Activated T-helper 1 cell treated with anti-CD3 and anti-CD28 coated beads, Interleukin-12 subunit alpha, Interleukin-12 subunit beta, Interleukin-2, Interleukin-4 antibody, amounts not matched to agents 30 ng/mL and 10 ng/mL and 1 ng/mL, durations not matched to agents 14 hours and 24 hours and 36 hours (primary cell): ENCODE measurements at regions of chr6 and their contacts with region 1.

Region 1: DNA sequence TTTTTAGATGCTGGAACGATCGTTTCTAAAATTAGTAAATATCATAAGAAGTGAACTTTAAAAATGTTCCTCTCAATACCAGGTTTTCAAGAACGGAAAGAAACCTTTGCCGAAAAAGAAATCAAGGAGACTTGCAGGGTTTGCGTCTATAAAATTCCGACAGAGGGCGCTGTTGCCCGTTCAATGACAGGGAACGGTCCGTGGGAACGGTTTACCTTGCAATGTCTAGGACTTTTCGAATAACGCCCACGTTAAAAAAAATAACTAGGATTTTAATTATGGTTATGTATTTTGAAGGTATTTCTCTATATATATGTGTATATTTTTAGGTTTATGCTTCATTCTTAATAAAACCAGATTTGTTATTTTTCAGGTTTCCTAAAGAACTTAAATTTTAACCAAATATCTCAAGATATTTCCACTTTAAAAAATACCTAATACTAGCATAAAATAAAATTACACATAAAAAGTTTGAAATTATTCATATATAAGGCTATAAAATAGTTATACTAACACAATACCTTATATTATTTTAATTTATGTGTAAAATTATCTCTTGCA is 2.5 kb upstream of the TFAP2B start:
- DNase-seq: peak; percentile 37
- H3K4me3 Mint-ChIP-seq: peak overlapping the region; percentile 88
- H3K27ac Mint-ChIP-seq: no peak overlapping the region
- H3K4me1 Mint-ChIP-seq: peaks cover 19% of the 10 kb centered on the region
- H3K27me3 Mint-ChIP-seq: peaks cover 48% of the 10 kb centered on the region

Region 2: GRCh38 chr6:50720623-50721022 is 95.6 kb before region 1 on chr6:
- intact Hi-C with region 1: loop called (anchors 2 kb)
- DNase-seq: no peak
- H3K4me3 Mint-ChIP-seq: no peak overlapping the region
- H3K27ac Mint-ChIP-seq: no peak overlapping the region
- H3K4me1 Mint-ChIP-seq: peaks cover 5% of the 10 kb centered on the region
- H3K27me3 Mint-ChIP-seq: peaks cover 63% of the 10 kb centered on the region

Region 3: GRCh38 chr6:50873167-50873566 is 57.0 kb after region 1 on chr6:
- intact Hi-C with region 1: no loop called
- DNase-seq: no peak
- H3K4me3 Mint-ChIP-seq: no peak overlapping the region
- H3K27ac Mint-ChIP-seq: no peak overlapping the region
- H3K4me1 Mint-ChIP-seq: no peaks in the 10 kb centered on the region
- H3K27me3 Mint-ChIP-seq: no peaks in the 10 kb centered on the region

Region 4: DNA sequence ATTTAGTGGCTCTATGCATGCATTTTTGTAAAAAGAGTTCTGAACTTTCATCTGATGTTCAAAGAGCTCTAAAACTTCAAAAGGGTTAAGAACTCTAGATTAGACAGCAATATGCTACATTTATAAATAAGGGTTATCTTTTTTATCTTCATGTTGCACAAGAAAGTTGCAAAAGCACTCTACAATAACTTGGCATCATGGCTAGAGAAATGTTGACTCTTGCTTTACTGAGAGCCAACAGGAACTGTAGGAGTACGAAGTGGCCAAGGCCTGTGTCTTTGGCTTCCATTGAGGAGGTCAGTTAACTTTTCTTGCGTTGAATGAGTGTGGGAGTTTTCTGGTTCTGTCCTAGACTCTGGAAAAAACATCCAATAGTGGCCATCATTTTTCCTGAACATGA is 519.3 kb after region 1 on chr6:
- intact Hi-C with region 1: no loop called
- DNase-seq: no peak
- H3K4me3 Mint-ChIP-seq: no peak overlapping the region
- H3K27ac Mint-ChIP-seq: no peak overlapping the region
- H3K4me1 Mint-ChIP-seq: no peaks in the 10 kb centered on the region
- H3K27me3 Mint-ChIP-seq: no peaks in the 10 kb centered on the region

Region 5: DNA sequence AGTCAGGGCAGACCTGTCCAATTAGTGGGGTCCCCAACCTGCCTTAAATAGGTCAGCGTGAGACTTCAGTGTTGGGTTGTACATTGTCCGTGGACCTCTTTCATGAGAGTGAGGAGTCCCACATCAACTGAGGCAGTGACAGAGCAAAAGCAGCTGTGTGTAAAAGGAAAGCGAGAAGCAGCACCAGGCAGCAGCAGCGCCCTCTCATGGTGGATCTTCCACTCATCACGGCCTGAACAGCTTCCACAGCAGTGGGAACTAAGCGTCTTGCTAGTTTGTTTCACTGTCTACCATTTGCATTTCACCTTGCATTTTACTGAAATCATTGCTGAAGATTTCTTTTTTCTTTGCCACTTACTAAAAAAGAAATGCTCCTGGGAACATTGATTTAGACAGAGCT is 937.4 kb after region 1 on chr6:
- intact Hi-C with region 1: loop called (anchors 2 kb)
- DNase-seq: no peak
- H3K4me3 Mint-ChIP-seq: no peak overlapping the region
- H3K27ac Mint-ChIP-seq: no peak overlapping the region
- H3K4me1 Mint-ChIP-seq: no peaks in the 10 kb centered on the region
- H3K27me3 Mint-ChIP-seq: no peaks in the 10 kb centered on the region

Region 6: DNA sequence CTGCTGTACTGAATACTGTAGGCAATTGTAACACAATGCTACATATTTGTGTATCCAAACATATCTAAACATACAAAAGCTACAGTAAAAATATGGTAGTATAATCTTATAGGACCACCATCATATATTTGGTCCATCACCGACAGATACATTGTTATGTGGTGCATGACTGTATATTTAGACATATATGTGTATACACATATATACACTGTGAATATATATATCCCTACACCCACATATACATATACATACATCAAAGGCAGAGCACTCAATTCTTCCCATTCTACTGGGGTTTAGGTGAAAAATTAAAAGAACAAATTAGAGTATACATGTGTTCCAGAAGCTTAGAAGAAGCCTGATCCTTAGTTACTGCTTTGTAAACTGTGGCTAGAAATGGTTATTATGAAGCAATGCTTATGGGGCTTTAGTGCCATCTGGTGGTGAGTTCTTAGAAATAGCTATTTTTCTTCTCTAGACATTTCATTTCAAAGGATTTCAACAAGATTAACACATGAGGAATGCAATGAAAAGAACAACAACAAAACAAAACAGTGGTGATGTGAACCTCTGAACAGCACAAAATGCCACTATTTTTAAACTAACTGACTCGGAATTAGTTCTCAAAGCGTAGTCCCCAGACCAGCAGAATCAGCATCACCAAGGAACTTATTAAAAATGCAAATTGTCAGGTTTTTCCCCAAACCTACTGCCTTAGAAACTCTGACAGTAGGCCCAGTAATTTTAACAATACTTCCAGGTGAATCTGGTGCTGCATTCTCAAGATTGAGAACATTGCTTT is 1233.3 kb after region 1 on chr6:
- intact Hi-C with region 1: loop called (anchors 2 kb)
- DNase-seq: no peak
- H3K4me3 Mint-ChIP-seq: no peak overlapping the region
- H3K27ac Mint-ChIP-seq: no peak overlapping the region
- H3K4me1 Mint-ChIP-seq: no peaks in the 10 kb centered on the region
- H3K27me3 Mint-ChIP-seq: peaks cover 8% of the 10 kb centered on the region